Right ventricle myocardium inferior (tissue), 1 donor: ENCODE measurements at regions of chr3 and their contacts with region 1.

Region 1: GRCh38 chr3:185176750-185177359 is 24.0 kb upstream of the C3orf70 start:
- DNase-seq: no peak
- ATAC-seq: no peak

Region 2: GRCh38 chr3:184874709-184875644 is 301.9 kb before region 1 on chr3:
- intact Hi-C with region 1: loop called (anchors 5 kb)
- DNase-seq: no peak
- ATAC-seq: no peak